OCI-LY7 (cell line): ENCODE measurements at regions of chr2 and their contacts with region 1.

Region 1: GRCh38 chr2:149160701-149161217 is 122.3 kb downstream of the LYPD6B start:
- DNase-seq: peak; percentile 85
- H3K4me3 ChIP-seq: peak overlapping the region; percentile 47
- H3K27ac ChIP-seq: peak overlapping the region; percentile 61
- H3K4me1 ChIP-seq: peaks cover 47% of the 10 kb centered on the region
- CTCF ChIP-seq: no peak

Region 2: DNA sequence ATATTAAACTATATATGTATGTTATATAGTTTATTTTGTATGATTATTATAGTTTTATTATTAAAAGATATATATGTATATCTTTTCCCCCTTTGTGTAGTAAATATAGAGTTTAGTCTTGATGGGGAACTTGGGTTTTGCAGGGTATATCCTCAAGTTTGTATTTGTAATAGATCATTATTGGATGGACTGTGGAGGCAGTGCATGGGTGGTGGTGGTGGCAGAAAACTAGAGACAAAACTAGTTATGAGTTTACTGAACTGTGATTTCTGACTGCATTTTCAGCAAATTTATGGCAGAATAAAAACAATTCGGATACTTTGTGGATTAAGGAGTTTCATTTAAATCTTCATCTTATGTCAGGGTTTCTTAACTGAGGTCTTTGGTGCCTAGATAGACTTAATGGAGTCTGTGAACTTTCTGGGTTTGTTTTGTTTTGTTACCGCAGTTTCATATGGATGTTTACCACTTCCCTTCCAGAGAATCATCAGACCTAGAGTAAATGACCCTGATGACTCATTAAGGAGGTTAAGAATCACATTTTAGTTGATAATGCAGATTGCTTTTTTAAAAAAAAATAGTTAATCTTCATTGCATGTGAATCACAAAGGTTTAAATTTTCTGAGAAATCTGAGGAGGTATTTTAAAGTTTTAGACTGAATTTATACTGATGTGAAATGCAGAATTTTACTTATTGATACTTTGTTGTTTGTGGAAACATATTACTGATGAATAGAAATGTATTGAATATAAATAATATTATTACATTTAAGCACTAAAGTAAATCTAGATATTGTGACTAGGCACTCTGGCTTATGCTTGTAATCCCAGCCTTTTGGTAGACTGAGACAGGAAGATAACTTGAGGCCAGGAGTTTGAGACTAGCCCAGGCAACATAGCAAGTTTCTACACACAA is 501.7 kb before region 1 on chr2:
- CTCF ChIA-PET with region 1: no interaction called
- POLR2A ChIA-PET with region 1: no interaction called
- intact Hi-C with region 1: loop called (anchors 10 kb)
- DNase-seq: no peak
- H3K4me3 ChIP-seq: no peak overlapping the region
- H3K27ac ChIP-seq: no peak overlapping the region
- H3K4me1 ChIP-seq: peaks cover 4% of the 10 kb centered on the region
- CTCF ChIP-seq: no peak

Region 3: DNA sequence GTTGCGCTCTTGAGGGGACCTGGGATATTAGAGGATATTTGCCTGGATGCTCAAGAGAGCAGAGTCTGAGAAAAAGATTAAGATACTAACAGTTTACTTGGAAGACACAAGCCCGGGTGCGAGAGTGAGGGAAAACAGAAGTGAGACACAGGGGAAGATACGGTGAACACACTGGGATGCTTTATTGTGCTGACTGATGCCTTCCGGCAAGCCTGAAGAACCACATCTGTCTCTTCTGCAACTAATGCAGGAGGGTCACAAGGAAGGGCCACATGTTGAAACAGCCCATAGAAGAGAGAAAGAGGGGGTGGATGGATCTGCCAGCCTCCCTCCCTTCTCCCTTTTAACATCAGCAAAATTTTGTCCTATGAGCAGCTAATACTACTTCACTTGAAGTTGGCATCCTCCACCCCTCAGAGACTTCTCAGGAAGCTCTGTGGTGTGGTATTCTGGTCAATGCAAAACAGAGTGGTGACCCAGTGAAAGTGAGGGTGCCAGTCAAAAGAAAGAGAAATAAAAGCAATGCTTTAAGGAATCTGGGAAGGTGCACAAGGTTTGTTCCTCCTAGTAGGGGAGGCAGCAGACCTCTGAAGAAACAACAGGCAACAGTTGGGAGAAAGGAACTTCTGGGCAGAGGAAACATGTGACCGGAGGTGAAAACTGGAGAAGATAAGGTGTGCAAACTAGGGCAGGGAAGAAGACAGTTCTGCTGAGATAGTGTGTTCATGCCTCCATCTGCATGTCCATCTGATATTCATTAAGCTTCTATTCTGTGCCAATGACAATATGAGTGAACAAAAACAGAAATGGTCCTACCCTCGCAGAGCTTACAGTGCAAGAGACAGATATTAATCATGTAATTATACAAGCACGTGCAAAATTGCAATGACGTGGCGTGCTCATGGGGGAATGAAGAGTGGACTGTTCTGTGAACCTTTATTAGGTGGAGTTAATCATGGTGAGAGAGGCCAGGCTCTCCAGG is 15.2 kb before region 1 on chr2:
- CTCF ChIA-PET with region 1: no interaction called
- POLR2A ChIA-PET with region 1: interaction called, 14 read pairs
- intact Hi-C with region 1: no loop called
- DNase-seq: peak; percentile 31
- H3K4me3 ChIP-seq: peak overlapping the region; percentile 14
- H3K27ac ChIP-seq: no peak overlapping the region
- H3K4me1 ChIP-seq: peaks cover 16% of the 10 kb centered on the region
- CTCF ChIP-seq: no peak

Region 4: DNA sequence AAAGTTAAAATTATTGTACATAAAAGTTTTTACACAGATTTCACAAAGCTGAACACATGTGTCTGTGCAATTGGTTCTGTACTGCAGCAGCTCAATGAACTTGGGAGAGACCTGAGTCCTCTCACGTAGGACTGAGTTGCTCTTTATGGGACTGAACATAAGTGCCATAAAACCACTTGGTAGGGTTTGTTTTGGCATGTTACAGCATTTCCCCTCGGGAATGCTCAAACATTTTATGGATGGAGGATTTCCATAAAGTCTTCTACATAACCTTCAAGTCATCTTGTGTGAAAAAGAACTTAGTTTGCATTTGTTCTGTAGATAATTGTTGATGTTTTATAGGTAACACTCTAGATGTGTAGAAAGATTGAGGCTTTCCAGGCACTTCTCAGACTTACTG is 185.5 kb after region 1 on chr2:
- CTCF ChIA-PET with region 1: no interaction called
- POLR2A ChIA-PET with region 1: no interaction called
- intact Hi-C with region 1: no loop called
- DNase-seq: no peak
- H3K4me3 ChIP-seq: no peak overlapping the region
- H3K27ac ChIP-seq: no peak overlapping the region
- H3K4me1 ChIP-seq: no peaks in the 10 kb centered on the region
- CTCF ChIP-seq: no peak

Region 5: DNA sequence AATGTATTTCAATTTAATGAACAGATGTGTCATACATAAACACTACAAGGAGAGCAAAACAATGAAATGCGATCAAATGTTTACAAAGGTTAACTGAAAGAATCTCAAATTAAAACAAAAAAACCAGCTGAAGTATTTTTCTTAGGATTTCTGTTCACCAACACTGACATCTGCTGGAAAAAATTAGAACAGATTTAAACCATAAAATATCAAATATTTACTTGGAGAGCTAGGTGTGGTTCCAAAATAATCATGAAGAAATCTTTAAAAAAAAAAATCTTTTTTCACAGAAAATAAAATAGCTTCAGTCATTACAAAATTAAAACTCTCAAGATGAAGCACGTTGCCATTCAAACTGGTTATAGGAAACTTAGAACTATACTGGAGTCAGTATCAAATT is 413.0 kb after region 1 on chr2:
- CTCF ChIA-PET with region 1: no interaction called
- POLR2A ChIA-PET with region 1: no interaction called
- intact Hi-C with region 1: no loop called
- DNase-seq: no peak
- H3K4me3 ChIP-seq: no peak overlapping the region
- H3K27ac ChIP-seq: no peak overlapping the region
- H3K4me1 ChIP-seq: no peaks in the 10 kb centered on the region
- CTCF ChIP-seq: peak; percentile 72

Region 6: DNA sequence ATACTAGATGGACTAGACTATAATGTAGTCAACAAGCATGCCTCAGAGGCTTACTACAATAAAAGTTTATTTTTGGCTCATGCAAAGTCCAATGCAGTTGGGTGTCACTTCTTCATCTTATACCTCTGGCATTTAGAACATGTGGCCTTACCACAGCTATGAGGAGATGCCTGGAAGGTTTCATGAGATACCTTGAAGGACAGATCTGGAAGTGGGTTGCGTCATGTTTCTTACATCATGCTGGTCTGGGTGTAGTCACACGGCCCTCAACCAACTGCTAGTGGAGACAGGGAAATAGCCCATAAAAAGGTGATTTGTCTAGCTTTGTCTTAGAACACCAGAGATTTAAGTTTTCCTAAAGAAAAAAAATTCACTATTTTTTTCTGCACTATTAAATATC is 518.5 kb after region 1 on chr2:
- CTCF ChIA-PET with region 1: no interaction called
- POLR2A ChIA-PET with region 1: no interaction called
- intact Hi-C with region 1: no loop called
- DNase-seq: no peak
- H3K4me3 ChIP-seq: no peak overlapping the region
- H3K27ac ChIP-seq: no peak overlapping the region
- H3K4me1 ChIP-seq: no peaks in the 10 kb centered on the region
- CTCF ChIP-seq: no peak